ENCODE measurements at regions of chr16 and their contacts with region 1.

Region 1: GRCh38 chr16:66894948-66895688 is 14.8 kb downstream of the PDP2 start:
- DNase-seq: peak; percentile 78
- CTCF ChIP-seq: peak; percentile 87

Region 2: DNA sequence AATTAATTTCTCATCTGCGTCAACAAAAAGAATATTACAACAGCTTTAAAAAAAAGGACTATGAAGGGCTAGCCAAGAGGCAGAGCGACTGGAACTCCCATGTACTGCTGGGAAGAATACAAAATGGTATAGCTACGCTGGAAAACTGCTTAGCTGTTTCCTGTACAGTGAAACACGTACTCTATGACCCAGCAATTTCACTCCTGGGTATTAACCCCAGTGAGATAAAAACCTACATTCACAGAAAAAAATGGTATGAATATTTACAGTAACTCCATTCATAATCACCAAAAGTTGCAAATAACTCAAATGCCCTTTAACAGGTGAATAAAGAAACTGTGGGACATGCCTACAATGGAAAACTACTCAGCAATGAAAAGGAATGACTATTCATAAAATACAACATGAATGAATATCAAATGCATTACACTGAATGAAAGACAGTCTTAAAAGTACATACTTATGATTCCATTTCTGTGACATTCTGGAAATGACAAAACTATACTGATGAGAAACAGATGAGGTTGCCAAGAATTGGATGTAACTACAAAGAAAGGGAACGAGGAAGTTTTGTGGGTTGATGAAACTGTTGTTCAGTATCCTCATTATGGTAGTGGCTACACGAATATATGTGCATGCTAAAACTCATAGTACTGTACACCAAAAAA is 226.2 kb before region 1 on chr16:
- CTCF ChIA-PET with region 1: no interaction called
- POLR2A ChIA-PET with region 1: no interaction called
- DNase-seq: no peak
- CTCF ChIP-seq: no peak

Region 3: DNA sequence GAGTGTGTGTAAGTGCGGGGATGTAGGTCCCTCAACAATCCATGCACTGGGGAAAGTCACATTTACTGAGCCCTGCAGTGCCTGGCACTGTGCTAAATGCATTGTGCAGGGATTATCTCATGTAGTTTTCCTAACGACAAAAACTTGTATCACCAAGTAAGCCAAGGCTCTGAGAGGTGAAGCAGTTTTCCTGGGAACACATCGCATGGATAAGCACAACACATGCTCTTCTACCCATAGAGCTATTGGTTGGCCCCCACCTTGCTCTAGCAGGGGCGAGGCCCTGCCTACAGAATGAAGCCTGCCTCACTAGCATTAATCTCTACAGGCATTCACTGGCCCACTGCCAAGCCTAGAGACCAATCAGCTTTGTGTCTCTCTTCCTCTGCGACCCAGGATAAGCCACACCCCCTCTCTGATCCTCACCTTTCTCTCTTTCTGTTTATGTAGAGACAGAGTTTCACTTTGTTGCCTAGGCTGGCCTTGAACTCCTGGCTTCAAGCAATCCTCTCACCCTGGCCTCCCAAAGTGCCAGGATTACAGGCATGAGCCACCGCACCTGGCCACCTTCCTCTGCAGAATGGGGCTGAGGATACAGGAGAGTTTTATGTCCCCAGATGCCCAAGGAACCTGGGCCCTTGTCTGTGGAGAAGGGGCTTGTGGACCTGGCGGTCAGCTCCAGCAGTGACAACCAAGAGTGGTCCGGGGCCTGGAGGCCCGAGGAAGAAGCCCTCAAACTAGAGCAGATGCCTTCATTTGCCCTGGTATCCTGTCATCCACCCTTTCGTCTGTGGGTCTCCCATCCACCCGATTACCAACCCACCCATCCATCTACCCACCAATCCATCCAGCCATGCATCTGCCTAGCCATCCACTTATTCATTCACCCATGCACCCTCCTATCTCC is 10.8 kb after region 1 on chr16:
- CTCF ChIA-PET with region 1: interaction called, 33 read pairs
- POLR2A ChIA-PET with region 1: no interaction called
- DNase-seq: no peak
- CTCF ChIP-seq: no peak

Region 4: GRCh38 chr16:66918803-66919568 is 23.9 kb after region 1 on chr16 and contains the start of gene CDH16:
- CTCF ChIA-PET with region 1: interaction called, 115 read pairs
- POLR2A ChIA-PET with region 1: no interaction called
- DNase-seq: no peak
- CTCF ChIP-seq: no peak

Region 5: GRCh38 chr16:66930189-66930588 is 35.1 kb after region 1 on chr16:
- CTCF ChIA-PET with region 1: interaction called, 115 read pairs
- POLR2A ChIA-PET with region 1: interaction called, 3 read pairs
- DNase-seq: no peak
- CTCF ChIP-seq: no peak

Region 6: GRCh38 chr16:67024384-67025209 is 129.5 kb after region 1 on chr16:
- CTCF ChIA-PET with region 1: no interaction called
- POLR2A ChIA-PET with region 1: no interaction called
- DNase-seq: no peak
- CTCF ChIP-seq: no peak

Measured in GM10248 (cell line).